Gastrocnemius medialis (tissue), 4 donors: ENCODE measurements at regions of chr12 and their contacts with region 1.

Region 1: GRCh38 chr12:65086236-65086635 is 34.9 kb downstream of the WIF1 start:
- DNase-seq: no peak
- ATAC-seq: no peak
- H3K4me3 ChIP-seq: no peak overlapping the region
- H3K27ac ChIP-seq: no peak overlapping the region
- H3K4me1 ChIP-seq: no peaks in the 10 kb centered on the region
- H3K27me3 ChIP-seq: no peaks in the 10 kb centered on the region
- CTCF ChIP-seq: no peak
- POLR2A ChIP-seq: no peak

Region 2: GRCh38 chr12:65895759-65896656 is 809.8 kb after region 1 on chr12:
- in situ Hi-C with region 1: no loop called
- intact Hi-C with region 1: loop called (anchors 5 kb)
- DNase-seq: no peak
- ATAC-seq: no peak
- H3K4me3 ChIP-seq: no peak overlapping the region
- H3K27ac ChIP-seq: no peak overlapping the region
- H3K4me1 ChIP-seq: peaks cover 10 to 13% of the 10 kb centered on the region in 2 donors
- H3K27me3 ChIP-seq: peaks cover 0 to 2% (median 0%) of the 10 kb centered on the region in 3 donors
- CTCF ChIP-seq: no peak
- POLR2A ChIP-seq: no peak